ENCODE measurements at regions of chr9 and their contacts with region 1.

Region 1: DNA sequence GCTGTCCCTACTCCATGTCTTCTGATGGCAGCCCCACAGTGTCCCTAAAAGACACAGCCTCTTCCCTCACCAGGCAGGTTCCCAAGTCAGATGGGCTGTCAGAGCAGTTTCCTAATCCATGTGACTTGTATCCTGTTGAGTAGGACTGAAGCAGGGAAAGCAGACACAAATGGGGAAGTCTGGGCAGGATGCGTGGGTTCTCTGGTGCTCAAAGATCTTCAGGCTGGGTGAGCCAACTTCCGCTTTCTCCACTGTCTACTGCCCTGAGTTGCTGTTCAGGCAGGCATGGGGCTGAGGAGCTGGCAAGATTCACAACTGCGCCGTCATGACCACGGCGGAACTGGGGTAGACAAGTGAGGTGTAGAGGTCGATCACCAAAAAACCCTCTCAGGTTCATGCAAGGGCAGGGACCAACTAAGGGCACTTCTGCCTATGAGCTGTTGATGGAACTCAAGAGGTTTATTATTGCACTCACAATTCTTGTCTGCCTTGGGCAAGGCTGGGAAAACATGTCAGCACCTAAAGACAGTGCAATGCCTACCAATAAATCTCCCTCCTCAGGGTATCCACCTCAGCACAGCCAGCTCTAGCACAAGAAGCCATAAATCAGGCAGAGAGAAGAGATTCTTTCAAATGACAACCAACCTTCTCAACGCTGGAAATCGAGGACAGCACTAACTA is 83.4 kb downstream of the RAPGEF1 start:
- DNase-seq: peak; percentile 99 to 100 (median 100)
- H3K4me3 ChIP-seq: peak overlapping the region in 1 of 3 experiments; percentile 1
- H3K4me3 Mint-ChIP-seq: peak overlapping the region; percentile 56 to 68
- H3K27ac ChIP-seq: peak overlapping the region; percentile 65 to 98
- H3K27ac Mint-ChIP-seq: peak overlapping the region; percentile 96 to 99 (median 98)
- H3K4me1 ChIP-seq: peaks cover 65 to 81% of the 10 kb centered on the region in 2 donors
- H3K4me1 Mint-ChIP-seq: peaks cover 63% of the 10 kb centered on the region
- H3K27me3 ChIP-seq: no peaks in the 10 kb centered on the region
- H3K27me3 Mint-ChIP-seq: peaks cover 0 to 2% (median 1%) of the 10 kb centered on the region in 3 donors
- CTCF ChIP-seq: no peak

Region 2: DNA sequence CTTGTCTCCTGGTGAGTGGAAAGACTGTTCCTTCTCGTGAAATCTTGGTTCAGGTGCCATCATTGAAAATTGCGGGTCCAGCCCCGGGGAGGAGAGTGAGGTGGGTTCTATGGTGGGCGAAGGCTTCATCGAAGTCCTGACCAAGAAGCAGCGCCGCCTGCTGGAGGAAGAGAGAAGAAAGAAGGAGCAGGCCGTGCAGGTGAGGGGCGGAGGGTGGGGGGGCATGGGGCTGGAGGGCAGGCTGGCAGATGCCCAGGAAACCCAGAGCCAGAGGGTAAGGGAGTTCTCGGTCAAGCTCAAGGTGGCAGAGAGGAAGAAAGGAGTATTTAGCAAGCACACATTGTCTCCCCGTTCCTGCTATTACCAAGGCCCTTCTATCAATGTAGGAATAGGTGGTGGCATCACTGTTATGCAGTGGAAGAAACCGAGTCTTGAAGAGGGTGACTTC is 178.1 kb before region 1 on chr9:
- intact Hi-C with region 1: no loop called
- DNase-seq: peak in 2 of 3 donors; percentile 3 to 17
- H3K4me3 ChIP-seq: no peak overlapping the region
- H3K4me3 Mint-ChIP-seq: no peak overlapping the region
- H3K27ac ChIP-seq: no peak overlapping the region
- H3K27ac Mint-ChIP-seq: peak overlapping the region in 2 of 7 donors; percentile 25 to 57
- H3K4me1 ChIP-seq: no peaks in the 10 kb centered on the region
- H3K4me1 Mint-ChIP-seq: no peaks in the 10 kb centered on the region
- H3K27me3 ChIP-seq: no peaks in the 10 kb centered on the region
- H3K27me3 Mint-ChIP-seq: peaks cover 0 to 1% (median 0%) of the 10 kb centered on the region in 3 donors
- CTCF ChIP-seq: peak; percentile 56

Region 3: DNA sequence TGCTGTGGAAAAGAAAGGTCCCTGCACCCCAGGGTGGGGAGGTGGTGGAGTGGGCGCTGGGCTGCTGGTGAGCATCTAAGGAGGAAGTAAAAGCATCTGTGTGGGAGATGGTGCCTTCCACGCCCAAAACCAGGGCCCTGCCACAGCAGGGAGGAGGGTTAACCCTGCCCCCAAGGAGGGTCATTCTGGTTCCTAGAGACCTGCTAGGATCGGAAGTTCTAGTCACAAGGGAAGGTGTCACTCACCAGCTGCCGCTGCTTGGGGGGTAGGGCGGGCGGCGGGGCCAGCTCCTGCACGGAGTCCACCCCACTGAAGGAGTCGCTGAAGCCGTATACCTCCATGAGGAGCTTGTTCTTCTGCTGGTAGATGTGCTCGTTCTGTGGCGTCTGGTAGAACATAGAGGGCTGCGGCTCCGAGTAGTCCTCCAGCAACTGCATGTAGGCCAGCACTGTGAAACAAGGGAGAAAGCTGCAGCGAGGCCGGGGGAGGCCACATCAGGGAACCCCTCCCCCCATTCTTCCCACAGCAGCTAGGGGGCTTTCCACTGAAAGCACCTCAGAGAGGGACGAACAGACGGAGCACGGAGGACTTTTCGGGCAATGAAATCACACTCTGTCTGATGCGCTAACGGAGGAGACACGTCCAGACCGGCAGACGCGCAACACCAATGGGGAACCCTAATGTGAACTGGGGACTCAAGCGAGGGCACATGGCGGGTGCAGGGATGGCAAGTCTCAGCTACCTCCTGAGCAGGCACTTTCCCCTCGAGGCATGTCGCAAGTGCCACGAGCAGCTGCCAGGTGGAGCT is 34.7 kb before region 1 on chr9:
- intact Hi-C with region 1: loop called in 1 of 2 experiments (anchors 5 kb)
- DNase-seq: peak; percentile 62 to 79 (median 74)
- H3K4me3 ChIP-seq: peak overlapping the region in 1 of 3 experiments; percentile 12
- H3K4me3 Mint-ChIP-seq: no peak overlapping the region
- H3K27ac ChIP-seq: peak overlapping the region; percentile 75 to 100
- H3K27ac Mint-ChIP-seq: peak overlapping the region; percentile 88 to 98 (median 93)
- H3K4me1 ChIP-seq: peaks cover 48 to 53% of the 10 kb centered on the region in 2 donors
- H3K4me1 Mint-ChIP-seq: peaks cover 61% of the 10 kb centered on the region
- H3K27me3 ChIP-seq: no peaks in the 10 kb centered on the region
- H3K27me3 Mint-ChIP-seq: peaks cover 0 to 3% (median 0%) of the 10 kb centered on the region in 3 donors
- CTCF ChIP-seq: no peak

Region 4: GRCh38 chr9:131635285-131635684 is 21.2 kb before region 1 on chr9:
- intact Hi-C with region 1: loop called in 1 of 2 experiments (anchors 1 kb)
- DNase-seq: peak; percentile 99 to 100 (median 99)
- H3K4me3 ChIP-seq: no peak overlapping the region
- H3K4me3 Mint-ChIP-seq: peak overlapping the region in 1 of 2 donors; percentile 60
- H3K27ac ChIP-seq: peak overlapping the region; percentile 81 to 97
- H3K27ac Mint-ChIP-seq: peak overlapping the region; percentile 94 to 99 (median 96)
- H3K4me1 ChIP-seq: peaks cover 34 to 42% of the 10 kb centered on the region in 2 donors
- H3K4me1 Mint-ChIP-seq: peaks cover 37% of the 10 kb centered on the region
- H3K27me3 ChIP-seq: no peaks in the 10 kb centered on the region
- H3K27me3 Mint-ChIP-seq: no peaks in the 10 kb centered on the region
- CTCF ChIP-seq: no peak

Region 5: GRCh38 chr9:131678499-131679111 is 22.1 kb after region 1 on chr9:
- intact Hi-C with region 1: no loop called
- DNase-seq: peak; percentile 81 to 90 (median 89)
- H3K4me3 ChIP-seq: no peak overlapping the region
- H3K4me3 Mint-ChIP-seq: peak overlapping the region; percentile 46 to 78
- H3K27ac ChIP-seq: peak overlapping the region; percentile 67 to 77
- H3K27ac Mint-ChIP-seq: peak overlapping the region; percentile 75 to 96 (median 90)
- H3K4me1 ChIP-seq: peaks cover 51 to 59% of the 10 kb centered on the region in 2 donors
- H3K4me1 Mint-ChIP-seq: peaks cover 73% of the 10 kb centered on the region
- H3K27me3 ChIP-seq: no peaks in the 10 kb centered on the region
- H3K27me3 Mint-ChIP-seq: peaks cover 0 to 1% (median 0%) of the 10 kb centered on the region in 3 donors
- CTCF ChIP-seq: no peak

Region 6: DNA sequence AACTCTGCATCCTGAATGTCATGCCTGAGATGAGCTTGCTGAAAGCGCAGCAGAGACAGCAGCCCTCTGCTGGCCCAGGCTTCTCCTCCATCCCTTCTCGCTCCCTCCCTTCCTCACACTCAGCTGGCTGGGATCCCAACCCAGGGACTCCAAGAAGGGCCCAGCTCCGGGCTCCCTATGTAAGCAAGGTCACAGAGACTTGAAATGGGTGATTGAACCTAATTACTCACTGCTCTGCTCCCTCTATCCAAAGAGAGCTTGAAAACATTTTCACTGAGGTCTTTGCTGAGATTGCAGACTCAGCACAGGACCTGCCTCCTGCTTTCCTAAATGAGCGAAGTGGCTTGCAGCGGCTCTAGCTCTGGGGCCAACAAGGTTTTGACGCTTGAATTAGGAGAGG is 40.6 kb after region 1 on chr9:
- intact Hi-C with region 1: loop called (anchors 5 kb)
- DNase-seq: no peak
- H3K4me3 ChIP-seq: peak overlapping the region in 1 of 3 experiments; percentile 7
- H3K4me3 Mint-ChIP-seq: peak overlapping the region in 1 of 2 donors; percentile 27
- H3K27ac ChIP-seq: peak overlapping the region; percentile 97 to 98
- H3K27ac Mint-ChIP-seq: peak overlapping the region; percentile 14 to 99 (median 96)
- H3K4me1 ChIP-seq: peaks cover 54 to 55% of the 10 kb centered on the region in 2 donors
- H3K4me1 Mint-ChIP-seq: peaks cover 72% of the 10 kb centered on the region
- H3K27me3 ChIP-seq: no peaks in the 10 kb centered on the region
- H3K27me3 Mint-ChIP-seq: no peaks in the 10 kb centered on the region
- CTCF ChIP-seq: no peak

Region 7: DNA sequence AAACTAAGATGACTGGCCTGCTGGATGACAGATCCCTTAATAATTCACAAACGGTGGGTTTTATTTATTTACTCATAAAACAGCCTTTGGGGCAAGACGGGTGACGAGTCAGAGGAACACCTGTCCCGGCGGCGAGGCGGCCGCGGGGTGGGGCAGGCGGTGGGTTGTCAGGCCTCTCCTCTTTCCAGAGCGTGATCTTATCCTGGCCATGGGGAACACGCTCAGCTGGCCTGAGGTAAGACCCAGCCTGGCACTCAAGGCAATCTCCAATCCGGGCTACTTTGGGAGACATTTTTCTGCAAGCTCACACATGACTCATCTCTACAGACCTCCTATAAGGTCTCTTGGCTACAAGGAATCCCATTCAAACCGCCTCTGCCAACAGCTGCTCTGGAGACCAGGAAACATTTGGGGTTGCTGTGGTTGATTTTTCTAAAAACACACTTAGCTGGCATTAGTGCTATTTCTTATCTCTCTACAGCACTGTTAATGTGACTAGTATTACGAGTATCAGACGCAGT is 77.1 kb after region 1 on chr9:
- intact Hi-C with region 1: loop called (anchors 2 to 10 kb)
- DNase-seq: peak; percentile 71 to 86 (median 79)
- H3K4me3 ChIP-seq: peak overlapping the region in 1 of 3 experiments; percentile 61
- H3K4me3 Mint-ChIP-seq: peak overlapping the region; percentile 67 to 68
- H3K27ac ChIP-seq: peak overlapping the region; percentile 89 to 94
- H3K27ac Mint-ChIP-seq: peak overlapping the region; percentile 81 to 95 (median 90)
- H3K4me1 ChIP-seq: peaks cover 97 to 98% of the 10 kb centered on the region in 2 donors
- H3K4me1 Mint-ChIP-seq: peaks cover 91% of the 10 kb centered on the region
- H3K27me3 ChIP-seq: no peaks in the 10 kb centered on the region
- H3K27me3 Mint-ChIP-seq: peaks cover 0 to 7% (median 0%) of the 10 kb centered on the region in 3 donors
- CTCF ChIP-seq: no peak

Measured in CD14-positive monocyte (primary cell).